Activated CD4-positive, alpha-beta memory T cell treated with anti-CD3 and anti-CD28 coated beads, Interleukin-2, amount 10 ng/mL, durations not matched to agents 7 days and 5 days (primary cell): ENCODE measurements at regions of chr10 and their contacts with region 1.

Region 1: GRCh38 chr10:63629363-63630084 is 108.3 kb downstream of the REEP3 start:
- DNase-seq: peak; percentile 83
- H3K4me3 Mint-ChIP-seq: peak overlapping the region; percentile 83
- H3K27ac Mint-ChIP-seq: peak overlapping the region; percentile 81
- H3K4me1 Mint-ChIP-seq: peaks cover 44% of the 10 kb centered on the region
- H3K27me3 Mint-ChIP-seq: peaks cover 7% of the 10 kb centered on the region

Region 2: GRCh38 chr10:63217120-63217605 is 412.4 kb before region 1 on chr10:
- CTCF ChIA-PET with region 1: interaction called, 22 read pairs
- POLR2A ChIA-PET with region 1: interaction called, 12 read pairs
- DNase-seq: no peak
- H3K4me3 Mint-ChIP-seq: no peak overlapping the region
- H3K27ac Mint-ChIP-seq: no peak overlapping the region
- H3K4me1 Mint-ChIP-seq: peaks cover 51% of the 10 kb centered on the region
- H3K27me3 Mint-ChIP-seq: no peaks in the 10 kb centered on the region

Region 3: DNA sequence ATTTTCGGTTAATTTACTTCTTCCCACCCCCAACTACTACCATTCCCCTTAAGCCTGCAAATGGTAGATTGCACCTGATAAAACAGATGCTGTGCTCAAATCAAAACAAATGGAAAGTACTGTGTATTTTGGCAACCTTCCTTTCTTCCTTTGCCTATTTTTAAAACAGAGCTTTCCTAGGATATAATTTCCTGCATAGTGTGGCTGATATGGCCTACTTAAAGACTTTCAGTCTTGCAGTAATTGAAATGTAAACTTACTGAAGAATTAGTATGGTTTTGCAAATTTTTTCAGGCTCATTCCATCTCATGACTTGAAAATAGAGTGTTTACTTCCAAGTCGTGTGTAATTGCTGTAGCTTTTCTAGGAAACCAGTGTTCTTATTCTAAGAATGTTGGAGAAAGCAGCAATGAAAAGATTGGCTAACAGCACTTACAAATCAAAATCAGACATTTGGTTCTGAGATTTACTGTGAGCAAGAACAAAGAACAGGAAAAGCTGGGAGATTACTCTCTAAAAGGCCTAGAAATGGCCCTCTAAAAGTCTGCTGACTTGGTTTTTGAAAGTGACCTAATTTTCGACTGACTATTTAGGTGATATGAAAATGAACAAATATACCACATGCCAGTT is 56.3 kb before region 1 on chr10:
- CTCF ChIA-PET with region 1: interaction called, 12 read pairs
- POLR2A ChIA-PET with region 1: no interaction called
- DNase-seq: no peak
- H3K4me3 Mint-ChIP-seq: no peak overlapping the region
- H3K27ac Mint-ChIP-seq: peak overlapping the region; percentile 63
- H3K4me1 Mint-ChIP-seq: peaks cover 22% of the 10 kb centered on the region
- H3K27me3 Mint-ChIP-seq: no peaks in the 10 kb centered on the region

Region 4: DNA sequence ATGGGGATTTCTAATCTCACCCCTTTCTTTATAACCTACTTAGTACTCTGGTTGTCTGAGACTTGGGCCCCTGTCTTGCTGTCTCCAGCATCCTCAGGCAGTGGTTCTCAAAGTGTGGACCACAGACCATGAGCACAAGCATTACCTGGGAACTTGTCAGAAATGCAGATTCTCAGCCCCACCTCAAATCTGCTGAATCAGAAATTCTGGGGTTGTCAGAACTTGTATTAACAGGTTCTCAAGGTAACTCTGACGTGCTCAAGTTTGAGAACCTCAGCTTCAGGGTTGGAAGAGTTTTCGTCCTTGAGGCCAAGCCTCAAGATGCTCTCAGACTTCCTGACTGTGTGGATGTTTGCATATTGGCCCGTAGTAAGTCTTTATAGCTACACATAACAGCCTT is 11.0 kb before region 1 on chr10:
- CTCF ChIA-PET with region 1: interaction called, 12 read pairs
- POLR2A ChIA-PET with region 1: interaction called, 5 read pairs
- DNase-seq: no peak
- H3K4me3 Mint-ChIP-seq: no peak overlapping the region
- H3K27ac Mint-ChIP-seq: no peak overlapping the region
- H3K4me1 Mint-ChIP-seq: no peaks in the 10 kb centered on the region
- H3K27me3 Mint-ChIP-seq: no peaks in the 10 kb centered on the region